HEK293 (cell line): ENCODE measurements at regions of chr4 and their contacts with region 1.

Region 1: GRCh38 chr4:3880615-3881120 is 114.5 kb downstream of the ADRA2C start:
- H3K4me3 ChIP-seq: no peak overlapping the region
- H3K27ac ChIP-seq: no peak overlapping the region
- H3K4me1 ChIP-seq: no peaks in the 10 kb centered on the region
- CTCF ChIP-seq: peak; percentile 91

Region 2: DNA sequence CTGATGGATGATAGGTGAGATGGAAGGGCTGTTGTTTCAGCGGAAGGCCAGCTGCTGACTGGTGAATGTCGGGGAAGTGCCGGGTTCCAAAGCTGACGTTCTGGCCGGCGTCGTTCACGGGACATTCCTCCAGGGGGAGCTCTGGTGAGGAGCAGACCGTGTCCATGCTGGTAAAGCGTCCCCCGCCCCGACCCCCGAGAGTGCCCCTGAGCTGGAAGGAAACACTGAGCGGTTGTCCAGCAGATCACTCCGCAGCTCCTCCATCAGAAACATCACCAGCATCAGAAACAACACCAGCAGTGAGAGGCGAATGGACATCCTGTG is 133.1 kb before region 1 on chr4:
- CTCF ChIA-PET with region 1: interaction called, 20 read pairs
- POLR2A ChIA-PET with region 1: no interaction called
- H3K4me3 ChIP-seq: no peak overlapping the region
- H3K27ac ChIP-seq: no peak overlapping the region
- H3K4me1 ChIP-seq: 0 out of 2 replicates have a peak, but pooled peaks cover 2% of the 10 kb centered on the region
- CTCF ChIP-seq: no peak

Region 3: DNA sequence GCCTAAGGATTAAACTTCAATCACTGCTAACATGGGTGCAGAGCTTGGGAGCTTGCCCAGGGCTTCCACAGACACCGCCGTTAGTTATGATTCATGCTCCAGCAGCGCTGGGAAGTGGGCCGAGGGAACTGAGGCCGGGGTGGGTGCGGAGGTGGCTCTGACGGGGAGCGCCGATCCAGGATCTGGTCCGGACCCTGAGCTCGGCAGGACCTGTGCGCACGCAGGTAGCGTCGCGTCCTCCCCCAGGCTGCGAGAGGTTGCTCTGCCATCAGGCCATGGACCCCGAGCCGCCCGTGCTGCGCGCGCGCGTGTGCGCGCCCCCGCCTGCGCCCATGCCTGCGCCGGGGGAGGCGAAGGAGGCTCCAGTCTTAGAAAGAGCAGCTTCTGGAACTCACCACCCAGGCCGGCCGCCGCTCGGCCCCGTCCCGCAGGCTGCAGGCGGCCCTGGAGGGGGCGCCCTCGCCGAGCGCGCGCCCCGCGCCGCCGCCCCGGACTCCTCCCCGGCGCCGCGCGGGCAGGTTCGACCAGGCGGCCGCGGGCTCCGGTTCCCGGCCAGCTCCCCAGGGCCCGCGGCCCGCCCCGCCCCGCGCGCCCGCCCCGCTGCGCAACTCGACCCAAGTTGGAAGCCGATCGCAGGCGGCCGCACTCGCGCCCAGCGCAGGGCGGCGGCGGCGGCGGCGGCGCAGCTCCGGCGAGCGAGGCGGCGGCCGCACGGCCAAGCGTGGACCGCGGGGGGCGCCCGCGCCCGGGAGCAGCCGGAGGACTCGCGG is 115.2 kb before region 1 on chr4:
- CTCF ChIA-PET with region 1: interaction called, 10 read pairs
- POLR2A ChIA-PET with region 1: no interaction called
- H3K4me3 ChIP-seq: peak overlapping the region; percentile 27
- H3K27ac ChIP-seq: peak overlapping the region; percentile 53; the same call in 1 of the 2 replicates
- H3K4me1 ChIP-seq: no peaks in the 10 kb centered on the region
- CTCF ChIP-seq: no peak